Activated CD4-positive, alpha-beta memory T cell treated with anti-CD3 and anti-CD28 coated beads, Interleukin-2, amount 10 ng/mL, durations not matched to agents 7 days and 5 days (primary cell): ENCODE measurements at regions of chr15 and their contacts with region 1.

Region 1: GRCh38 chr15:89334510-89335288 is at the start of gene POLG:
- DNase-seq: peak; percentile 99
- H3K4me3 Mint-ChIP-seq: peak within 1 kb of the TSS; percentile 84
- H3K27ac Mint-ChIP-seq: peak within 1 kb of the TSS; percentile 93
- H3K4me1 Mint-ChIP-seq: peaks cover 53% of the 10 kb centered on the region
- H3K27me3 Mint-ChIP-seq: peaks cover 8% of the 10 kb centered on the region
- total RNA-seq, gene POLG: 106 to 109 TPM

Region 2: DNA sequence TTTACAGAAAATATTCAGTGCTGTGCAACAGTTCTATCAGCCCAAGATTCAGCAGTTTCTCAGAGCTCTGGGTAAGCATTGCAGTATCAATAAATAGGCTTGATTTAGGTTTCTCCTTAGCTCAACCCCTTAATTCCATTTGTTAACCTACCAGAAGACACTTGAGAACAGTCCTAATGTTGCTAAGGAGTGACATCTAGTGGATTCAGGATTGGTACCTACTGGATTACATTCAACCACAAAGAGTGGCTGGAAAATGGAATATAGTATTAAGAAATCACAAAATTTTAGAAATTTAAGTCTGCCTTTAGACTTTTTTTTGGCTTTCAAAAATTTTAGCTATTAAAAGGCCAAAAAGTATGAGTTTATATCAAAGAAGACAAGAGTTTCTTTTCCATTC is 34.8 kb before region 1 on chr15:
- CTCF ChIA-PET with region 1: no interaction called
- POLR2A ChIA-PET with region 1: interaction called, 19 read pairs
- DNase-seq: no peak
- H3K4me3 Mint-ChIP-seq: no peak overlapping the region
- H3K27ac Mint-ChIP-seq: peak overlapping the region; percentile 56
- H3K4me1 Mint-ChIP-seq: peaks cover 53% of the 10 kb centered on the region
- H3K27me3 Mint-ChIP-seq: no peaks in the 10 kb centered on the region

Region 3: GRCh38 chr15:89321521-89322410 is 12.9 kb before region 1 on chr15:
- CTCF ChIA-PET with region 1: interaction called, 4 read pairs
- POLR2A ChIA-PET with region 1: interaction called, 156 read pairs
- DNase-seq: no peak
- H3K4me3 Mint-ChIP-seq: no peak overlapping the region
- H3K27ac Mint-ChIP-seq: no peak overlapping the region
- H3K4me1 Mint-ChIP-seq: peaks cover 18% of the 10 kb centered on the region
- H3K27me3 Mint-ChIP-seq: no peaks in the 10 kb centered on the region